Cardiac septum (tissue), 1 donor: ENCODE measurements at regions of chr11 and their contacts with region 1.

Region 1: GRCh38 chr11:33700425-33701271 is at the start of gene C11orf91:
- DNase-seq: peak; percentile 99
- total RNA-seq, gene C11orf91: 1.4 TPM

Region 2: GRCh38 chr11:33722579-33723225 is 22.1 kb after region 1 on chr11:
- intact Hi-C with region 1: loop called (anchors 1 kb)
- DNase-seq: no peak

Region 3: GRCh38 chr11:33736148-33736809 is 35.6 kb after region 1 on chr11 and contains the start of gene CD59:
- intact Hi-C with region 1: loop called (anchors 2 kb)
- DNase-seq: peak; percentile 99
- total RNA-seq, gene CD59: 932 TPM